ENCODE measurements at regions of chr9 and their contacts with region 1.

Region 1: DNA sequence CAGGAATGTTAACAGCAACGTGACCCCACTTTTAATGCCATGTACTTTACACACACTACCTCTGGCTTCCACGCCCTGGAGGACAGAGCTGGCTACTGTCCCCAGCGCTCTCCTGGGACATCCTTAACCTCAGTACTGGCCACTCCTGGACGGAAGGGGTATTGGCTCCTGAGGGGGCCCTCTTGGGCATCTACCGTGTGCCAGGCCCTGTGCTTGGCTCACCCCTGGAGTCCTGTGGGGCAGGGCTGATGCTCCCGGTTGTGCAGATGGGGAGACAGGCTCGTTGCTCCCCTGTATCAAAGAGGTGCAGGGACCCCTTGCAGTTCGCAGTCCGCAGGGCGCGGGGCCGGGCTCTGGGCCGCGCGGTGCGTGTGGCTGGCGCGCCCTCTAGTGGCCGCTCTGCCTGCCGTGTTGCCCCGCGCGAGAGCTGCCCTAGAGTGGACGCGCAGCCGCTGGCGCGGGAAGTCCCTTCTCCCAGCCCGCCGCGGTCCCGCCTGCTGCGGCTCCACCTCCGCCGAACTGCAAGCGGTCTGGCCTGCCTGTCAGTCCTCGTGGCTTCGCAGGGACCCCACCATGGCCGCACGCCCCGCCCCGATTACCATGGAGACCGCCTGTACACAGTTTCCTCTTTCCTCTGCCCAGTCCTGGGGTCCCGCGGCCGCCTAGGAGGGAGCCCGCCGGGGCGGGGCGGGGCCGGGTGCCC is at the start of gene WDR38:
- DNase-seq: peak; percentile 84
- H3K4me3 Mint-ChIP-seq: peak within 1 kb of the TSS; percentile 57
- H3K27ac Mint-ChIP-seq: no peak within 1 kb of the TSS
- H3K4me1 Mint-ChIP-seq: peaks cover 10% of the 10 kb centered on the region
- H3K27me3 Mint-ChIP-seq: peaks cover 50% of the 10 kb centered on the region

Region 2: DNA sequence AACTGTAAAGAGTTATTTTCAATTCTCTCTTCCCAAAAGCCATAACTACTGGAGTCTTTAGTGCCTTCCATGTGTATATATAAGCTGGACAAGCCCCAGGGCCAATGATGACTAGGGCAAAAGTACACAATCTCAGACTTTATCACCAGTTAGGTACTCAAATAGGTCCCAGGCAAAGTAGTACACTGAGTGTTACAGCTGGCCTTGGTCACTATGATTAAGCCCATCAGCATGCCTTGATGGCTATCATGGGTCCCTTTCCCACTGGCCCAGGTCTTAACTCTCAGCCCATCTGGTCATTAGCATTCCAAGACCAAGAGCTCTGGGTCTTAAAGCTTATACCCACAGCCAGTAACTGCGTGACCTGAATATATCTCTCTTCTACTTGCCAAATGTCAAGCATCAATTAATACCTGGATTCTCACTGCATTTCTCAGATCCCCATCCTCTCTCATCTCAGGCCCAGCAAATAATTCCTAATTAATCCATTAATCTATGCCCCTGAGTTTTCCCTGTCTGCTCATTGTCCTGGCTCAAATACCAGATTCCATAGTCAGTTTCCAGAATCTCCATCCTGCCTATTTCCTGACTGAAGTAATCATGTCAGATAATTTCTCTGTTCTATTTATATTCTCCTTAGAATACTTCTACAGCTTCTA is 144.2 kb before region 1 on chr9:
- CTCF ChIA-PET with region 1: interaction called, 11 read pairs
- DNase-seq: no peak
- H3K4me3 Mint-ChIP-seq: no peak overlapping the region
- H3K27ac Mint-ChIP-seq: no peak overlapping the region
- H3K4me1 Mint-ChIP-seq: no peaks in the 10 kb centered on the region
- H3K27me3 Mint-ChIP-seq: peaks cover 12% of the 10 kb centered on the region

Region 3: DNA sequence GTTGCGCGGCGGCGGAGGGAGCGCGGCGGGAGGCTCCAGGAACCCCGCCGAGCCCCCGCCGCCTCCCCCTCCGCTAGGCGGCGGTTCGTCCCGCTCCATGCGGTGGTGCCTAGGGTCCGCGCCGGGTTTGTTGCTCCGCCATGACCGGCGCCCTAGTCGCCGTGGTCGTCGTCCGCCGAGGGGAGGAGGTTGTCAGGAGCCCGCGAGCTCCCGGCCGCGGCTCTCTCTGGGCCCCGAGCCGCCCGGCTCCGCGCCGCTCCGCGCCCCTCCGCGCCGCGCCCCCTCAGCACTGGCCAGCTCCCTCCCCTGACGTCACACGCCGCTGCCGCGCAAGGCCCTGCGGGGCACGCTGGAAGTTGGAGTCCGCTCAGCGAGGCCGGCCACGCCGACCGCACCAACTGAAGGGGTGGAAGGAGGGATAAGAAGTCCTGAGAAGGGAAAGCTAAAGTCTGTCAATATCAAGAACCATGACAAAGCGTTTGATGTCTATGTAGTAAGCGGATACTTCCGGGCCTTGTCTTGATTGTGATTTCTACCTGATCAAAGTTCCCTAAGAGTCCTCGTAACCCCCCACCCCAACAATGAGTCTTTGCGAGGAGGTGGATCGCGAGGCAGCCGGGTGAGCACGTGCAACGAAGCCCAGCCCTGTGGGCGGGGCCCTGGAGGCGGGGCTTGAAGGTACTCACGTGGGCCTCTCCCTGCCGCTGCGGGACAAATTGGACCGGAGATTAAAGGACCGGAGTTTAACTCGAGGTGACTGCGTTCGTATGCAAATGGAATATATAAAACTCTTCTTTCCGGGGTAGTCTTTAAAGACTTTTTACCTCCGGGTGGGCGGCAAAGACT is 81.7 kb before region 1 on chr9 and contains the start of gene NR6A1:
- CTCF ChIA-PET with region 1: interaction called, 332 read pairs
- DNase-seq: peak; percentile 96
- H3K4me3 Mint-ChIP-seq: peak within 1 kb of the TSS; percentile 81
- H3K27ac Mint-ChIP-seq: peak within 1 kb of the TSS; percentile 58
- H3K4me1 Mint-ChIP-seq: peaks cover 52% of the 10 kb centered on the region
- H3K27me3 Mint-ChIP-seq: peaks cover 91% of the 10 kb centered on the region

Region 4: DNA sequence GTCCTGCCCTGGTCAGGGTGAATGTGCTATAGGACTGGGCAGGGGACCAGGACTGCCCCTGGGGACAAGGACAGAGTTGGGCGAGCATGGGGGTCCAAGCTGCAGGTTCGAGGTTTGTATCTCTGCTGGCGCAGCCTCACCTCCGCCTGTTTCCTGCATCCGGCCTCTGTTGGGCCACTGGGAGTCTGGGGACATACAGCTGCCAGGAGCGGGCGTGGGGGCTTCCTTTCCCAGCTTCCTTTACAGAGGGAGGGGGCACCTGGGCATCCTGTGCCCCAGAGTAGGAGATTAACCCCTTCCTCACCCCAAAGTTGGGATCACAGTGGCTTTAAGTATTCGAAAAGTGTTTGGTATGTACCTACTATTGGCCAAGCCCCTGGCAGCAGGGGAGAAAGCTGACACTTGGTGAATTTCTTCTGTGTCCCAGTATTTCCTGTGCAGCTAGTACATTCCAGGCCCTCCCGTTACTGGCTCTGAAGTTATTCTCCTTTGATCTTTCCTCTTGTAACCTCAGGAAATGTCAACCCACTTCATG is 57.0 kb before region 1 on chr9:
- CTCF ChIA-PET with region 1: interaction called, 10 read pairs
- DNase-seq: no peak
- H3K4me3 Mint-ChIP-seq: no peak overlapping the region
- H3K27ac Mint-ChIP-seq: no peak overlapping the region
- H3K4me1 Mint-ChIP-seq: peaks cover 5% of the 10 kb centered on the region
- H3K27me3 Mint-ChIP-seq: peaks cover 69% of the 10 kb centered on the region

Region 5: GRCh38 chr9:124818431-124819281 is 34.3 kb before region 1 on chr9:
- CTCF ChIA-PET with region 1: interaction called, 13 read pairs
- DNase-seq: peak; percentile 43
- H3K4me3 Mint-ChIP-seq: no peak overlapping the region
- H3K27ac Mint-ChIP-seq: no peak overlapping the region
- H3K4me1 Mint-ChIP-seq: peaks cover 18% of the 10 kb centered on the region
- H3K27me3 Mint-ChIP-seq: peaks cover 41% of the 10 kb centered on the region

Region 6: GRCh38 chr9:124839612-124840299 is 13.2 kb before region 1 on chr9:
- CTCF ChIA-PET with region 1: interaction called, 29 read pairs
- DNase-seq: no peak
- H3K4me3 Mint-ChIP-seq: no peak overlapping the region
- H3K27ac Mint-ChIP-seq: no peak overlapping the region
- H3K4me1 Mint-ChIP-seq: no peaks in the 10 kb centered on the region
- H3K27me3 Mint-ChIP-seq: peaks cover 77% of the 10 kb centered on the region

Region 7: DNA sequence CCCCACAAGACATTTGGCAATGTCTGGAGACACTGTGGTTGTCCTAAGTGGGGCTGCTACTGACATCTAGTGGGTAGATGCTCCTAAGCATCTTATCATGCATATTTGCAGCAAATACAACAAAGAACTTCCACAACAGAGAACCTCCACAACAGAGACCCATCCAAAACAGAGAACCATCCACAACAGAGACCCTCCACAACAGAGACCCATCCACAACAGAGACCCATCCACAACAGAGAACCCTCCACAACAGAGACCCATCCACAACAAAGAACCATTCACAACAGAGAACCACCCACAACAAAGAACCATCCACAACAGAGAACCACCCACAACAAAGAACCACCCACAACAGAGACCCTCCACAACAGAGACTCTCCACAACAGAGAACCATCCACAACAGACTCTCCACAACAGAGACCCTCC is 41.8 kb after region 1 on chr9:
- CTCF ChIA-PET with region 1: interaction called, 26 read pairs
- DNase-seq: peak; percentile 57
- H3K4me3 Mint-ChIP-seq: no peak overlapping the region
- H3K27ac Mint-ChIP-seq: peak overlapping the region; percentile 63
- H3K4me1 Mint-ChIP-seq: peaks cover 15% of the 10 kb centered on the region
- H3K27me3 Mint-ChIP-seq: peaks cover 5% of the 10 kb centered on the region

Measured in activated naive CD4-positive, alpha-beta T cell treated with anti-CD3 and anti-CD28 coated beads, Interleukin-2, amount 10 ng/mL, durations not matched to agents 7 days and 5 days (primary cell).